Activated CD4-positive, alpha-beta memory T cell treated with anti-CD3 and anti-CD28 coated beads for 36 hours (primary cell): ENCODE measurements at regions of chr10 and their contacts with region 1.

Region 1: DNA sequence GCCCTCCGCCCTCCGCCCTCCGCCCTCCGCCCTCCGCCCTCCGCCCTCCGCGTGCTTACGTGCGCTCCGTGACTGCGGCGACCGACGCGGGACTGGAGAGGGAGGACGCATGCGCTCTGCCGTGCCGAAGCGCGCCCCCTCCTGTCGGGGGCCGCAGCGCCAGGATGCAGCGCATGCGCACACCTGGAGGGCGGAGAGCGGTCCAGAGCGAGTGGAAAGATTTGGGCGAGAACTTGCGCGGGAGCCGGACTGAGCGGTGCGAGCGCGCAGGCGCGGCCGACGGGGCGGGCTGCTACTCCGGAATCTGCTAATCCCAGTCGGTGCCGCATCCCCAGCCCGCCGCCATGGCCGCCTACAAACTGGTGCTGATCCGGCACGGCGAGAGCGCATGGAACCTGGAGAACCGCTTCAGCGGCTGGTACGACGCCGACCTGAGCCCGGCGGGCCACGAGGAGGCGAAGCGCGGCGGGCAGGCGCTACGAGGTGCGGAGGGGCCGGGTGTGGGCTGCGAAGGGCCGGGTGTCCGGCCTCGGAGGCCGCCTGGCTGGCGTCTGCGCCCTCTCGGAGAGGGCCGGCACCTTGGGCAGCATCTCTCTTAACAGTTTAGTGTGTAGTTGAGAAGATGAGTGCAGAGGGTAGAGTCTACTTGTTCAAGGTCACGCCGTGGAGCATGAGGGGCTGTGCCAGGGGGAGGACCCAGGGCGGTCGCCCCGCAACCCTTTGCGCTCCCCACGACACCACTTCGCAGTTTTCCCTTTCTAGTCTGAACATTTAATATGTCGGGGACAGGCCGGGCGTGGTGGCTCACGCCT is at the start of gene PGAM1:
- DNase-seq: peak; percentile 97
- H3K4me3 Mint-ChIP-seq: peak within 1 kb of the TSS; percentile 93
- H3K27ac Mint-ChIP-seq: peak within 1 kb of the TSS; percentile 98
- H3K4me1 Mint-ChIP-seq: peaks cover 47% of the 10 kb centered on the region
- H3K27me3 Mint-ChIP-seq: peaks cover 2% of the 10 kb centered on the region
- total RNA-seq, gene PGAM1: 1,430 to 1,457 TPM

Region 2: GRCh38 chr10:97325754-97326153 is 100.4 kb before region 1 on chr10:
- CTCF ChIA-PET with region 1: no interaction called
- POLR2A ChIA-PET with region 1: no interaction called
- intact Hi-C with region 1: no loop called
- DNase-seq: no peak
- H3K4me3 Mint-ChIP-seq: no peak overlapping the region
- H3K27ac Mint-ChIP-seq: no peak overlapping the region
- H3K4me1 Mint-ChIP-seq: peaks cover 38% of the 10 kb centered on the region
- H3K27me3 Mint-ChIP-seq: no peaks in the 10 kb centered on the region

Region 3: GRCh38 chr10:97353945-97354344 is 72.2 kb before region 1 on chr10:
- CTCF ChIA-PET with region 1: no interaction called
- POLR2A ChIA-PET with region 1: no interaction called
- intact Hi-C with region 1: no loop called
- DNase-seq: no peak
- H3K4me3 Mint-ChIP-seq: no peak overlapping the region
- H3K27ac Mint-ChIP-seq: no peak overlapping the region
- H3K4me1 Mint-ChIP-seq: no peaks in the 10 kb centered on the region
- H3K27me3 Mint-ChIP-seq: no peaks in the 10 kb centered on the region

Region 4: GRCh38 chr10:97400665-97401454 is 25.3 kb before region 1 on chr10 and contains the start of gene RRP12:
- CTCF ChIA-PET with region 1: interaction called, 194 read pairs
- POLR2A ChIA-PET with region 1: interaction called, 25 read pairs
- intact Hi-C with region 1: loop called (anchors 2 kb)
- DNase-seq: peak; percentile 88
- H3K4me3 Mint-ChIP-seq: peak within 1 kb of the TSS; percentile 93
- H3K27ac Mint-ChIP-seq: peak within 1 kb of the TSS; percentile 88
- H3K4me1 Mint-ChIP-seq: peaks cover 10% of the 10 kb centered on the region
- H3K27me3 Mint-ChIP-seq: no peaks in the 10 kb centered on the region
- total RNA-seq, gene RRP12: 40.4 to 41.8 TPM

Region 5: DNA sequence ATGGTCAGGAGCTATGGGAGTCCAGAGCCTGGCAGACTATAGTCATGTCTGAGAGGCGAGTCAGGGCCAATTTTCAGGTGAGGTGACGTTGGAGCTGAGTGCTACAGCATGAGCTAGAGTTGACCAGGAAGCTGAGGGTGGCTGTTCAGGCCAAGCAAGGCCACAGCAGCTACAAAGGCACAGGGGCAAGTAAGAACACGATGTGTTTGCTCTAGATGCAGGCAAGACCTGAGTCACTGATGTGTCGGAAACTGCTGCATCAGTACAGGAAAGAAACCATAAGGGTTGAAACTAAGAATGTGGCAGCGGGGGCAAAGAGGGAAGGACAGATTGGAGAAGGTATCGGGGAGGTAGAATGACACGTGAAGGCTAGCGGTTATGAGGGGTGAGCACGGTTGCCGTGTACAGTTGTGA is 13.3 kb before region 1 on chr10:
- CTCF ChIA-PET with region 1: interaction called, 194 read pairs
- POLR2A ChIA-PET with region 1: interaction called, 326 read pairs
- intact Hi-C with region 1: loop called (anchors 1 kb)
- DNase-seq: peak; percentile 90
- H3K4me3 Mint-ChIP-seq: peak overlapping the region; percentile 59
- H3K27ac Mint-ChIP-seq: peak overlapping the region; percentile 92
- H3K4me1 Mint-ChIP-seq: peaks cover 55% of the 10 kb centered on the region
- H3K27me3 Mint-ChIP-seq: no peaks in the 10 kb centered on the region

Region 6: GRCh38 chr10:97445722-97446639 is 19.8 kb after region 1 on chr10 and contains the starts of genes EXOSC1 and ZDHHC16:
- CTCF ChIA-PET with region 1: interaction called, 9 read pairs
- POLR2A ChIA-PET with region 1: interaction called, 33 read pairs
- intact Hi-C with region 1: loop called (anchors 1 kb)
- DNase-seq: peak; percentile 96
- H3K4me3 Mint-ChIP-seq: peak within 1 kb of the TSS; percentile 99
- H3K27ac Mint-ChIP-seq: peak within 1 kb of the TSS; percentile 58
- H3K4me1 Mint-ChIP-seq: peaks cover 57% of the 10 kb centered on the region
- H3K27me3 Mint-ChIP-seq: no peaks in the 10 kb centered on the region
- total RNA-seq, gene EXOSC1: 69.0 to 75.1 TPM
- total RNA-seq, gene ZDHHC16: 42.5 to 43.6 TPM

Region 7: GRCh38 chr10:97640174-97640867 is 214.2 kb after region 1 on chr10 and contains the start of gene PI4K2A:
- CTCF ChIA-PET with region 1: interaction called, 3 read pairs
- POLR2A ChIA-PET with region 1: no interaction called
- intact Hi-C with region 1: loop called (anchors 1 kb)
- DNase-seq: peak; percentile 100
- H3K4me3 Mint-ChIP-seq: peak within 1 kb of the TSS; percentile 97
- H3K27ac Mint-ChIP-seq: peak within 1 kb of the TSS; percentile 79
- H3K4me1 Mint-ChIP-seq: peaks cover 17% of the 10 kb centered on the region
- H3K27me3 Mint-ChIP-seq: no peaks in the 10 kb centered on the region
- total RNA-seq, gene PI4K2A: 13.1 to 13.2 TPM

Region 8: DNA sequence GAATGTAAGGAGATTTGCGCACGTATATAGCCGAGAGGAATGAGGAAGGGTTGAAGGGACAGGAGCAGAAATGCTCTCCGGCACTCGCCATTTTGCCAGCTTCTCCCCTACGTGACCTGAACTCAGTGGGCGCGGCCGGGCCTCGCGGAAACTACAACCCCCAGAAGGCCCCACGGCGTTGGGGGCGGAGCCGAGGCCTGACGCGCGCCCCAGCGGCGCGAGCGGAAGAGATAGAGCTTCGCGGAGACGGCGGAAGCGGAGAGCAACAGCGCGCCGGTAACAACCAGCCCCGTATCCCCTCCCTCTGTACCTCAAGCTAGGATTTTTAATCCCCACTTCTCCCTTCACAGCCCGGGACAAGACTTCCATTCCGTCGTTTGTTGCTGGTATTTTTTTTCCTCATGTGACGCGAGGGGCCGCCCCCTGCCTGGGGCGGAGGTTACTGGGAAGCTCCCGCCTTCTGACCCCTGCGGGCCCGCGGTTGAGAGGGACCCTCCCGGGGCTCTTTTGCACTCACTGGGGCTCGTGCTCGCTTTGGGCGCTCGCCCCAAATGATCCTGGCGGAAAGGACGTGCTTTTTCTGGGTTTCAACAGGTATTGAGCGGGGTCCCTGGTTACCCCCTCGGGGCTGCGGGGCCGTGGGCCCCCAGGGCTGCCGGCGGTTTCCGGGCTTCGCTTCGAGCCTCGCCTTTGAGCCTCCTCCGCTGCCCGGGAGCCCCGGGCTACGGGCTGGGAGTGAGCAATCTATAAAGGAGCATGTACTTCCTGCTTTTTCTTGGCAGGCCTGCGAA is 708.5 kb after region 1 on chr10 and contains the start of gene R3HCC1L:
- CTCF ChIA-PET with region 1: no interaction called
- POLR2A ChIA-PET with region 1: no interaction called
- intact Hi-C with region 1: no loop called
- DNase-seq: peak; percentile 97
- H3K4me3 Mint-ChIP-seq: peak within 1 kb of the TSS; percentile 94
- H3K27ac Mint-ChIP-seq: peak within 1 kb of the TSS; percentile 85
- H3K4me1 Mint-ChIP-seq: peaks cover 43% of the 10 kb centered on the region
- H3K27me3 Mint-ChIP-seq: no peaks in the 10 kb centered on the region
- total RNA-seq, gene R3HCC1L: 13.2 to 13.3 TPM